Activated CD4-positive, alpha-beta T cell treated with anti-CD3 and anti-CD28 coated beads for 36 hours (primary cell): ENCODE measurements at regions of chr1 and their contacts with region 1.

Region 1: GRCh38 chr1:189619682-189620332 is 857.9 kb downstream of the BRINP3 start:
- DNase-seq: no peak
- ATAC-seq: no peak
- H3K4me3 Mint-ChIP-seq: no peak overlapping the region
- H3K27ac Mint-ChIP-seq: no peak overlapping the region
- H3K4me1 Mint-ChIP-seq: no peaks in the 10 kb centered on the region
- H3K27me3 Mint-ChIP-seq: no peaks in the 10 kb centered on the region

Region 2: GRCh38 chr1:188761226-188761625 is 858.6 kb before region 1 on chr1:
- CTCF ChIA-PET with region 1: no interaction called
- POLR2A ChIA-PET with region 1: no interaction called
- intact Hi-C with region 1: no loop called
- DNase-seq: no peak
- ATAC-seq: no peak
- H3K4me3 Mint-ChIP-seq: no peak overlapping the region
- H3K27ac Mint-ChIP-seq: no peak overlapping the region
- H3K4me1 Mint-ChIP-seq: no peaks in the 10 kb centered on the region
- H3K27me3 Mint-ChIP-seq: no peaks in the 10 kb centered on the region

Region 3: DNA sequence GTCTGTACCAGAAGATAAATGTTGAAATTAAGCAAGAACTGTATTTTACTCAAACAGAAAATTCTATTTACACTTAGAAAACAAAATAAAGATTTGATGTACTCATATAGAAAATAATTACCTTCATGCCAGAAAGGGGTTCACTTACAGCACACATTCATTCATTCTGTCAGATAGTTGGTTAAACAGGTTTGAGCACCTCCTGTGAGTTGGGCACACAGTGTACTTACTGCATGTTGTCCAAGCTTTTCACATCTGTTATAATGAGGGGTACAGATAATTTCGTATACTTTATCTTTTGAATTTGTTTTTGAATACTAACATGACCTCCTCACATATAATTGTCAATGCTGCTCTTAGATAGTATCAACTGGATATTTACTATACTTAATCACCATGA is 45.4 kb before region 1 on chr1:
- CTCF ChIA-PET with region 1: no interaction called
- POLR2A ChIA-PET with region 1: no interaction called
- intact Hi-C with region 1: loop called in 1 of 2 experiments (anchors 5 kb)
- DNase-seq: no peak
- ATAC-seq: no peak
- H3K4me3 Mint-ChIP-seq: no peak overlapping the region
- H3K27ac Mint-ChIP-seq: no peak overlapping the region
- H3K4me1 Mint-ChIP-seq: no peaks in the 10 kb centered on the region
- H3K27me3 Mint-ChIP-seq: no peaks in the 10 kb centered on the region